ENCODE measurements at regions of chr6 and their contacts with region 1.

Region 1: GRCh38 chr6:84764332-84765049 is at the start of gene TBX18:
- H3K4me3 ChIP-seq: peak within 1 kb of the TSS; percentile 59
- H3K27ac ChIP-seq: peak within 1 kb of the TSS; percentile 97
- H3K4me1 ChIP-seq: peaks cover 8% of the 10 kb centered on the region
- CTCF ChIP-seq: no peak; the same call in 1 of the 2 replicates

Region 2: DNA sequence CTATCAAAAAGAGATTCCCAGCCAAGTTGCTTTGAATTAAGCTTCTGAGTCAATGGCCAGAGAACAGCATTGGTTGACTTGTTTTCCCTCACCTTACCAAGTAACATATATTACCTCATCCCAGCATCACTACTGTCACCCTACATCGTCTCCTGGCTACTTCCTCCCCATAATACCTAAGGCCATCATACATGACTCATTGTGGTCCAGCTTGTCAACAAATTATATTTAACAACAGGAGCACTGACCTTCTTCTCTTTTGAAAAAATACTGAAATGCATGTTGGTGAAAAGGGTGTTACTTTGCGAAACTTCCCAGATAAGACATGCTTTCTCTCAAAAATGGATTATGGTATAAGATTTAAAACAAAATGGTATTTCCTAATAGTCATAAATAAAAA is 107.0 kb before region 1 on chr6:
- CTCF ChIA-PET with region 1: no interaction called
- POLR2A ChIA-PET with region 1: no interaction called
- H3K4me3 ChIP-seq: no peak overlapping the region
- H3K27ac ChIP-seq: no peak overlapping the region
- H3K4me1 ChIP-seq: no peaks in the 10 kb centered on the region
- CTCF ChIP-seq: no peak

Region 3: GRCh38 chr6:84752118-84752850 is 12.2 kb before region 1 on chr6:
- CTCF ChIA-PET with region 1: interaction called, 5 read pairs
- POLR2A ChIA-PET with region 1: interaction called, 23 read pairs
- H3K4me3 ChIP-seq: no peak overlapping the region
- H3K27ac ChIP-seq: no peak overlapping the region
- H3K4me1 ChIP-seq: no peaks in the 10 kb centered on the region
- CTCF ChIP-seq: no peak